Transverse colon (tissue), 4 donors: ENCODE measurements at regions of chr18 and their contacts with region 1.

Region 1: DNA sequence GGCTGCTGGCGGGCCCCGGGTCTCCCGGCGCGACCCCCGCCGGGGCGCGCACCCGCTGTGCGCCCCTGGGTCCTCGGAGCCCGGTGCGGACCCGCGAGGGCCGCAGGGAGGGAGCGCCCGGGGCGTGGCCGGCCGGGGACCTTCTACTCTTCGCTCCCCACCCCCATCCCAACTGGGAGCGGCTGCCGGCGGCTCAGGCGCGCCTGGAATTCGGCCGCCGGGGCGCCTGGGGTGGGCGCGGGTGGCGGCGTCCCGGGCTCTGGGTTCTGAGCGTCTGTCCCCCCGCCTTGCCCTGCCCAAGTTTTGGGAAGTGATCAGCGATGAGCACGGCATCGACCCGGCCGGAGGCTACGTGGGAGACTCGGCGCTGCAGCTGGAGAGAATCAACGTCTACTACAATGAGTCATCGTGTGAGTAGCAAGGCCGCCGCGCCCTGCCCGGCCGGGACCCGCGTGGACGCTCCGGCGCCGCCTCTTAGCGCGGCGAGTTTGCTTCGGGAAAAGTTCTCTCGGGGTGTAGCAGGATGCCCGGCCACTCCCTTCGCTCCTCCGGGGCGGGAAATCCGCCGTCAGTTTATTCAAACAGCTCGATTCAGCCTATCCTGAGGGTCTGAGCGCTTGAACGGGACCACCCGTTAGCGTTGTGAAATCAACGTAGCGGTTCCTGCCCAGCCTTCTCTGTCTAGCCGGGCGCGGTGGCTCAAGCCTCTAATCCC is 502 bp downstream of the TUBB6 start:
- DNase-seq: peak; percentile 75
- H3K4me3 ChIP-seq: peak overlapping the region; percentile 31 to 76 (median 70)
- H3K27ac ChIP-seq: peak overlapping the region; percentile 93 to 99 (median 94)
- H3K4me1 ChIP-seq: peaks cover 0 to 44% (median 14%) of the 10 kb centered on the region in 4 donors
- H3K27me3 ChIP-seq: peaks cover 52% of the 10 kb centered on the region
- CTCF ChIP-seq: no peak
- EP300 ChIP-seq: no peak
- POLR2A ChIP-seq: peak; percentile 58

Region 2: GRCh38 chr18:12255626-12256026 is 52.9 kb before region 1 on chr18:
- in situ Hi-C with region 1: no loop called
- intact Hi-C with region 1: no loop called
- DNase-seq: no peak
- H3K4me3 ChIP-seq: no peak overlapping the region
- H3K27ac ChIP-seq: no peak overlapping the region
- H3K4me1 ChIP-seq: peaks cover 6 to 13% (median 9%) of the 10 kb centered on the region in 4 donors
- H3K27me3 ChIP-seq: peaks cover 37% of the 10 kb centered on the region
- CTCF ChIP-seq: no peak
- EP300 ChIP-seq: no peak
- POLR2A ChIP-seq: no peak

Region 3: DNA sequence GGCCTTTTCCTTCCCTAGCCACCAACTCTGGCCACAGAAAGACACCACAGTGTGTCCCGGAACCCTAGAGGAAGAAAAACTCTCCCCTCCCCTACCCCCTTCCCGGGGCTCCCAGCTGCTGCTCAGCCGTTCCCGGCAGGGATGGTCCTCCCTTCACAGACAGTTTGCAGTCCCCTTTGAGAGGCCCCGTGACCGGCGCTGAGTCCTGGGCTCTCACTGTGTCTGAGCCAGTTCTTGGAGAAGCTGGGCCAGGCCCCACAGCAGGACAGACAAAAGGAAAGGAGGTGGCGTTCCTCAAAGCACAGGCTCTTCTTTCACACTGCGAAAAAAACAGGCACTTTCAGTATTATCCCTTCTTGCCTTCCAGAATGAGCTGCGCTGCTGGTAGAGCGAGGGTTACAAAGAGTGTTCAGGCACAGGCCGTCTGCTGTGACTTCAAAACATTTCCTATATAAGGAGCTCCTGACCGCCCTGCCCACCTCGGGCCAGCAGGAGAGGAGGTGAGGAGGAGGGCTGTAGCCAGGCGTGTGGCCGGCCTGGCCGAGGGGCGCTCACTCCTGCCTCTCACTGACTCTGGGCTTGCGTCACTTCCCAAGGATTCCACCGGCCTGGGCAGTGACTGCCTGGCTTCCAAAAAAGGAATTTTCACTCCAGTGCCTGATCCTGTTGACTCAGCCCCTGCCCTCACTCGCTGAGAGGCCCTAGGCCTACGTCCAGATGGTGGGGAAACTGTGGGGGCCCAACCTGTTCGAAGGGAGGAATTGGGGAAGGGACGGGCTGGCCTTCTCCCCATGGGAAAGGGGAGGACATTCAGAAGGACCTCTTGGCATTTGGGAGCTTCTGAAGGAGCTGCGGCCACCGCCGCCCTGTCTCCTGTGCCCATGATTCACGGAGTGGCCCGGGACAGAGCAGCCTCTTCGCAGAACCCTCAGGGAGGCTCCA is 29.5 kb before region 1 on chr18:
- in situ Hi-C with region 1: no loop called
- intact Hi-C with region 1: loop called (anchors 2 kb)
- DNase-seq: peak; percentile 69
- H3K4me3 ChIP-seq: peak overlapping the region; percentile 20 to 37 (median 27)
- H3K27ac ChIP-seq: peak overlapping the region; percentile 90 to 97 (median 94)
- H3K4me1 ChIP-seq: peaks cover 4 to 24% (median 6%) of the 10 kb centered on the region in 4 donors
- H3K27me3 ChIP-seq: no peaks in the 10 kb centered on the region
- CTCF ChIP-seq: peak in 2 of 5 experiments; percentile 23 to 42
- EP300 ChIP-seq: peak; percentile 36
- POLR2A ChIP-seq: peak; percentile 63

Region 4: GRCh38 chr18:12287684-12288402 is 20.7 kb before region 1 on chr18:
- in situ Hi-C with region 1: no loop called
- intact Hi-C with region 1: loop called (anchors 1 kb)
- DNase-seq: peak; percentile 81
- H3K4me3 ChIP-seq: peak overlapping the region; percentile 5 to 46 (median 24)
- H3K27ac ChIP-seq: peak overlapping the region; percentile 65 to 88 (median 74)
- H3K4me1 ChIP-seq: peaks cover 9 to 21% (median 16%) of the 10 kb centered on the region in 4 donors
- H3K27me3 ChIP-seq: peaks cover 53% of the 10 kb centered on the region
- CTCF ChIP-seq: no peak
- EP300 ChIP-seq: no peak
- POLR2A ChIP-seq: peak; percentile 24

Region 5: DNA sequence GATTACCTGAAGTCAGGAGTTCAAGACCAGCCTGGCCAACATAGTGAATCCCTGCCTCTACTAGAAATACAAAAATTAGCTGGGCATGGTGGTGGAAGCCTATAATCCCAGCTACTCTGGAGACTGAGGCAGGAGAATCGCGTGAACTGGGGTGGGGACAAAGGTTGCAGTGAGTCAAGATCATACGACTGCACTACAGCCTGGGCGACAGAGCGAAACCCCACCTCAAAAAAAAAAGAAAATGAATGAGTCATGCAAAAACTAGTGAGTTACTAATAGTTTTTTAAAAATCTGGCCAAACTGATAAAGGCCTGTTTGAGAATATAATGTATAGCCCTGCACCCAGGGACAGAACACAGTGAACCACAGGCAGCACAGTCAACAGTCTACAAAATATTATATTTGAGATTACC is 51.0 kb after region 1 on chr18:
- in situ Hi-C with region 1: no loop called
- intact Hi-C with region 1: no loop called
- DNase-seq: no peak
- H3K4me3 ChIP-seq: no peak overlapping the region
- H3K27ac ChIP-seq: no peak overlapping the region
- H3K4me1 ChIP-seq: no peaks in the 10 kb centered on the region
- H3K27me3 ChIP-seq: no peaks in the 10 kb centered on the region
- CTCF ChIP-seq: no peak
- EP300 ChIP-seq: no peak
- POLR2A ChIP-seq: no peak

Region 6: GRCh38 chr18:12376718-12377555 is 68.4 kb after region 1 on chr18 and contains the start of gene AFG3L2:
- in situ Hi-C with region 1: no loop called
- intact Hi-C with region 1: loop called (anchors 1 kb)
- DNase-seq: peak; percentile 100
- H3K4me3 ChIP-seq: peak within 1 kb of the TSS; percentile 74 to 87 (median 80)
- H3K27ac ChIP-seq: peak within 1 kb of the TSS; percentile 100
- H3K4me1 ChIP-seq: peaks cover 30 to 48% (median 41%) of the 10 kb centered on the region in 4 donors
- H3K27me3 ChIP-seq: no peaks in the 10 kb centered on the region
- CTCF ChIP-seq: no peak
- EP300 ChIP-seq: no peak
- POLR2A ChIP-seq: peak; percentile 74
- total RNA-seq, gene AFG3L2: 74.1 to 95.6 (median 92.6) TPM